ENCODE measurements at regions of chr14 and their contacts with region 1.

Region 1: GRCh38 chr14:21092273-21093011 is 6.0 kb downstream of the ZNF219 start:
- DNase-seq: peak; percentile 90
- H3K4me3 Mint-ChIP-seq: peak overlapping the region; percentile 24
- H3K27ac Mint-ChIP-seq: peak overlapping the region; percentile 3
- H3K4me1 Mint-ChIP-seq: peaks cover 8% of the 10 kb centered on the region
- H3K27me3 Mint-ChIP-seq: no peaks in the 10 kb centered on the region
- CTCF ChIP-seq: peak; percentile 99

Region 2: DNA sequence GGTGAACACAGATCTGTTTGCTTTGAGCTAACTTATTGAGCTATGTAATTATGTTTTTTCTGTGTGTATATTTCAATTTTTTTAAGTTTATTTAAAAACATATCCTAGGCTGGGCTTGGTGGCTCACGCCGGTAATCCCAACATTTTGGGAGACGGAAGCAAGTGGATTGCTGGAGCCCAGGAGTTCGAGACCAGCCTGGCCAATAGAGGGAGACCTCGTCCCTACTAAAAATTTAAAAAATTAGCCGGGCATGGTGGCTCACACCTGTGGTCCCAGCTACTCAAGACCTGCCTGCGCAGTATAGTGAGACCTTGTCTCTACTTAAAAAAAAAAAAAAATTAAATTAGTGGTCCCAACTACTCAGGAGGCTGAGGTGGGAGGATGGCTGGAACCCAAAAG is 273.6 kb before region 1 on chr14:
- CTCF ChIA-PET with region 1: no interaction called
- intact Hi-C with region 1: no loop called
- DNase-seq: peak; percentile 56
- H3K4me3 Mint-ChIP-seq: no peak overlapping the region
- H3K27ac Mint-ChIP-seq: no peak overlapping the region
- H3K4me1 Mint-ChIP-seq: peaks cover 24% of the 10 kb centered on the region
- H3K27me3 Mint-ChIP-seq: no peaks in the 10 kb centered on the region
- CTCF ChIP-seq: peak; percentile 40

Region 3: GRCh38 chr14:21054123-21054767 is 38.2 kb before region 1 on chr14:
- CTCF ChIA-PET with region 1: no interaction called
- intact Hi-C with region 1: no loop called
- DNase-seq: peak; percentile 59
- H3K4me3 Mint-ChIP-seq: no peak overlapping the region
- H3K27ac Mint-ChIP-seq: peak overlapping the region; percentile 23
- H3K4me1 Mint-ChIP-seq: peaks cover 21% of the 10 kb centered on the region
- H3K27me3 Mint-ChIP-seq: no peaks in the 10 kb centered on the region
- CTCF ChIP-seq: no peak

Region 4: DNA sequence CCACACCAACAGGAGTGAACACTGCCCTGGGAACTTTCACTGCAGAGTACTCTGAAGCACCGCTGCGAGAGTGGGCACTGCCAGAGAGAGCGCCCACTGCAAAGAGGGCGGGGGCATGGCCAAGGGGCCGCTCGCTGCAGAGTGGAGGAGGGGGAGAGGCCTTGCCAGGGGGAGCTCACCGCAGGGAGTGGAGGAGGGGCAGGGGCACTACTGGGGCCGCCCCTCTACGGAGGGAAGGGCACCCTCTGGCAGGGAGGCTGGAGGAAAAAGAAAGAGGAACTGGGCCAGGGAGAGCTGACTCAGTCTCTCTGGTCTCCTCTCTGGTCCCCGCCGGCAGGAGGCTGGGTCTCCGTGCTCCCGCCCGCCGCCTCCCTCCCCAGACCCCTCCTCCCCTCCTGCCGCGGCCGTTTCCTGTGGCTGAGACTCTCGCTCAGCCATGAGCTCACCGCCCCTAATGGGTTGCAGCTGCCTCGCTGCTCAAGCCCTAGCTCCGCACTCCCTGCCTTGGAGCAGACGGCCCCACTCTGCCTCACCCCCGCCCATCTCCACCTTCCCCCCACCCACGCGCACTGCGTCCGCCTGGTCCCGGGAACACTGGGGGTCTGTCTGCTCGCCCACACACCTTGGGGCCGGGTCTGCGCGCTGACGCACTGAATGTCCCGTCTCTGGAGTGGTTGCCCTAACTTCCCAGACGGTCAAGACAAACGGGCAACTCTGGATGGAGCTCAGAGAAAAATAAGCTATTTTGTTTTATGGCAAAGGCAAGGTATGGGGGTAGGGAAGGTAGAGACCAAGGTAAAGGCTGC is 21.0 kb before region 1 on chr14:
- CTCF ChIA-PET with region 1: interaction called, 14 read pairs
- intact Hi-C with region 1: loop called (anchors 2 kb)
- DNase-seq: peak; percentile 58
- H3K4me3 Mint-ChIP-seq: peak overlapping the region; percentile 97
- H3K27ac Mint-ChIP-seq: peak overlapping the region; percentile 35
- H3K4me1 Mint-ChIP-seq: peaks cover 8% of the 10 kb centered on the region
- H3K27me3 Mint-ChIP-seq: peaks cover 34% of the 10 kb centered on the region
- CTCF ChIP-seq: no peak

Region 5: GRCh38 chr14:21589317-21589716 is 496.9 kb after region 1 on chr14:
- CTCF ChIA-PET with region 1: no interaction called
- intact Hi-C with region 1: no loop called
- DNase-seq: no peak
- H3K4me3 Mint-ChIP-seq: no peak overlapping the region
- H3K27ac Mint-ChIP-seq: no peak overlapping the region
- H3K4me1 Mint-ChIP-seq: no peaks in the 10 kb centered on the region
- H3K27me3 Mint-ChIP-seq: peaks cover 24% of the 10 kb centered on the region
- CTCF ChIP-seq: no peak

Measured in Calu3 (cell line).